B cell (primary cell): ENCODE measurements at regions of chr14 and their contacts with region 1.

Region 1: GRCh38 chr14:35687335-35687939 is 121.7 kb downstream of the RALGAPA1 start:
- DNase-seq: peak; percentile 30
- ATAC-seq: peak; percentile 51
- H3K4me3 ChIP-seq: no peak overlapping the region
- H3K4me3 Mint-ChIP-seq: no peak overlapping the region
- H3K27ac ChIP-seq: no peak overlapping the region
- H3K27ac Mint-ChIP-seq: no peak overlapping the region
- H3K4me1 ChIP-seq: peaks cover 0 to 3% of the 10 kb centered on the region in 2 donors
- H3K4me1 Mint-ChIP-seq: peaks cover 6% of the 10 kb centered on the region
- H3K27me3 ChIP-seq: no peaks in the 10 kb centered on the region
- H3K27me3 Mint-ChIP-seq: no peaks in the 10 kb centered on the region
- CTCF ChIP-seq: peak; percentile 83

Region 2: DNA sequence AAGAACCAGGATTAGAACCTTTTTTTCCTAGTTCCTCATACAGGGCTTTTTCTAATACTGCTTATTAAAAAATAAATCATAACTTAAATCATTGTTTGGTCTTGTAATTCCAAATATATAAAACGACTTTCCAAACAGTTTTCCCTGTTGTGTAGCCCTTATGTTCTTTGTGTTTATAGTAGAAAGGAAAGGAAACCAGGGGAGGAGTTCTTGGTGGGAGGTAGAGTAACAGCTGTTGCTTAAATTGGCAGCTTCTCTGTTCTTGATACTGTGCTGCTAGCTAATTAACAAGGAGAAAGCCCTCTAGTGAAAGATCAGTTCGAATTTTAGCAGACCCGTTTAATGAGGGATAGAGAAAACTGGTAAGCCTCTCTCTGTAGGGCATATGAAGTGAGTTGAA is 689.7 kb before region 1 on chr14:
- CTCF ChIA-PET with region 1: no interaction called
- POLR2A ChIA-PET with region 1: no interaction called
- intact Hi-C with region 1: loop called (anchors 10 kb)
- DNase-seq: no peak
- ATAC-seq: no peak
- H3K4me3 ChIP-seq: no peak overlapping the region
- H3K4me3 Mint-ChIP-seq: no peak overlapping the region
- H3K27ac ChIP-seq: no peak overlapping the region
- H3K27ac Mint-ChIP-seq: no peak overlapping the region
- H3K4me1 ChIP-seq: no peaks in the 10 kb centered on the region
- H3K4me1 Mint-ChIP-seq: peaks cover 8% of the 10 kb centered on the region
- H3K27me3 ChIP-seq: no peaks in the 10 kb centered on the region
- H3K27me3 Mint-ChIP-seq: no peaks in the 10 kb centered on the region
- CTCF ChIP-seq: no peak

Region 3: DNA sequence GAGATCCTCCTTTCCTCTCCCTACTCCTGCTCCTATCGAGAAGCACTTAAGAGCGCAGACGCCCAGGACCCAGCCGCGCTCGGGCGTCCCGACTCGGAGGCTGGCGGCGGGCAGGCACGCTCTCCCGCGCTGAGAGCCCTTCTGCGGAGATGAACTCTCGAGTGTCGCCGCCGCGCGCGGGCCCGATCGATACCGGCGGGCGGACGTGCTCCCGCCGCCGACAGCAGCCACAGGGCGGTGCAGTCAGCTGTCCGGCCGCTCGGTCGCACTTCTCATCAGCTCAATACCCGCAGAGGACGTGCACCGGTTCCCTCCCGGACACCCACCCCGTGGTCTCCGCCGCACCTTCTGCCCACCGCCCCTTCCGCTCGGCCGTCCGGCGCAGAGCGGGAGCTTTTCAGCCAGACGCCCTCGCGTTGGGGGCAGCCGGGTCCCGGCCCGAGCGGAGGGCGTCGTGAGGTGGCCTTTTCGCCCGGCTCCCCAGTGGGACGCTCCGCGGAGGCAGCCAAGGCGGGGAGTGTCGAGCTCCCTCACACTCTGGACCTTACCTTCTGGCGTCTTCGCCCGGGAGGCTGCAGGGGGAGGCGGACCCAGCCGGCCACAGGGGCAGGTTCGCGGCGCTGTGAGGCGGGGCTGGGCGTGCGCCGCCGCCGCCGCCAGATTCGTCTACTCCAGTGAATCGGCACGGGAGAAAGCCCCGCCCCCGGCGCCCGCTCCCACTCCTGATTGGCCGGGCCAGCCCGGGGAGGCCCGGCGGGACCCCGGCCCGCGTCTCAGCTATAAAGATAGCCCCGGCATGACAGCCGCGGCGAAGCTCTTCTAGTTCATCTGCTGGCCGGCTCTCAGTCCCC is 153.9 kb before region 1 on chr14 and contains the start of gene INSM2:
- CTCF ChIA-PET with region 1: no interaction called
- POLR2A ChIA-PET with region 1: no interaction called
- intact Hi-C with region 1: no loop called
- DNase-seq: peak; percentile 57
- ATAC-seq: peak; percentile 65
- H3K4me3 ChIP-seq: peak within 1 kb of the TSS in 4 of 5 experiments; percentile 43 to 67 (median 62)
- H3K4me3 Mint-ChIP-seq: peak within 1 kb of the TSS; percentile 87
- H3K27ac ChIP-seq: no peak within 1 kb of the TSS
- H3K27ac Mint-ChIP-seq: no peak within 1 kb of the TSS
- H3K4me1 ChIP-seq: peaks cover 21 to 23% of the 10 kb centered on the region in 2 donors
- H3K4me1 Mint-ChIP-seq: peaks cover 18% of the 10 kb centered on the region
- H3K27me3 ChIP-seq: peaks cover 3 to 35% (median 34%) of the 10 kb centered on the region in 4 experiments
- H3K27me3 Mint-ChIP-seq: peaks cover 57% of the 10 kb centered on the region
- CTCF ChIP-seq: no peak
- total RNA-seq, gene INSM2: not detected in 2 replicates

Region 4: GRCh38 chr14:35631071-35631805 is 56.2 kb before region 1 on chr14:
- CTCF ChIA-PET with region 1: no interaction called
- POLR2A ChIA-PET with region 1: no interaction called
- intact Hi-C with region 1: no loop called
- DNase-seq: no peak
- ATAC-seq: no peak
- H3K4me3 ChIP-seq: no peak overlapping the region
- H3K4me3 Mint-ChIP-seq: no peak overlapping the region
- H3K27ac ChIP-seq: no peak overlapping the region
- H3K27ac Mint-ChIP-seq: no peak overlapping the region
- H3K4me1 ChIP-seq: no peaks in the 10 kb centered on the region
- H3K4me1 Mint-ChIP-seq: peaks cover 3% of the 10 kb centered on the region
- H3K27me3 ChIP-seq: no peaks in the 10 kb centered on the region
- H3K27me3 Mint-ChIP-seq: no peaks in the 10 kb centered on the region
- CTCF ChIP-seq: no peak

Region 5: DNA sequence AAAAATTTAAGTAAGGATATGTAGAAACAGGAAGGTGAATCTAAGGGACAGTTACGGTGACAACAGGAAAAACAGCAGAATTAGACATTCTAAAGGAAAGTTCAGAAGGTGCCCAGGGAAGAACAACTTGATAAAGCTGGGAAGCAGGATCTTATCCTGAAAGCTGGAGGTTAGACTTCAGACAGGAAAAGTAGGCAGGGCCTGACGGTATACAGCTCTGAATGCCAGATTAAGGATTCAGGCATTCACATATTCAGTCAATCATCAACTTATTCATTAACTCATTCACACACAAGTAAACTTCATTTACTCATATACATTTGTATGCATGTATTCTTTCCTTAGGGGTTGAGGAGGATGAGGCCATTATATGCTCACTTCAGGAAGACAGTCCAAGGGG is 40.3 kb after region 1 on chr14:
- CTCF ChIA-PET with region 1: no interaction called
- POLR2A ChIA-PET with region 1: no interaction called
- intact Hi-C with region 1: no loop called
- DNase-seq: no peak
- ATAC-seq: no peak
- H3K4me3 ChIP-seq: no peak overlapping the region
- H3K4me3 Mint-ChIP-seq: no peak overlapping the region
- H3K27ac ChIP-seq: no peak overlapping the region
- H3K27ac Mint-ChIP-seq: no peak overlapping the region
- H3K4me1 ChIP-seq: no peaks in the 10 kb centered on the region
- H3K4me1 Mint-ChIP-seq: no peaks in the 10 kb centered on the region
- H3K27me3 ChIP-seq: no peaks in the 10 kb centered on the region
- H3K27me3 Mint-ChIP-seq: no peaks in the 10 kb centered on the region
- CTCF ChIP-seq: no peak

Region 6: DNA sequence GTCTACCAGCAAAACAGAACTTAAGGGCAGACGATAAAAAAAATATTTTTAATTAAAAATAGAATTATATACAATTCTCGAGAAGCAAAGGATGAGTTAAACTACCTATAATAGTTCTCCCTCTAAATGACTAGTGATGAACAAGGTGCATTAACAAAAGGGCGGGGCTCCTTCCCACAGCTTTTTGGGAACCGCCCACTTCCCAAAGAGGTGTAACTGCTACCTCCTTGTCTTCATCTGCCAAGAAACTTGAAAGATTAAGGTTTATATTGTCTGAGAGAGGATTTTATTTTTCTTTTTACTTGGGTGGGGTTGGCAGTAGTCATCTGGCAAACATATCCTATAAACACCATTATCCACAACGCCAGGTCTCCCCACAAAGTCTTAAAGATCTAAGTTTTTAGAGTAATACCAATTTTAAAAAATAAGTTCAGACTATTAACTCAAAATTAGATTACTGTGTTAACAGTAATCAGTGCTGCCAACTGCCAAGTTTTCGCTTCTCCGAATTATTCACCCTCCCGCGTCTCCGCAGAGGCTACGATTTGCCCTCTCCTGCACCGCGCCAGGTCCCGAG is 120.7 kb after region 1 on chr14:
- CTCF ChIA-PET with region 1: no interaction called
- POLR2A ChIA-PET with region 1: no interaction called
- intact Hi-C with region 1: loop called (anchors 10 kb)
- DNase-seq: no peak
- ATAC-seq: no peak
- H3K4me3 ChIP-seq: peak overlapping the region; percentile 57 to 81 (median 70)
- H3K4me3 Mint-ChIP-seq: peak overlapping the region; percentile 98
- H3K27ac ChIP-seq: peak overlapping the region; percentile 78 to 88
- H3K27ac Mint-ChIP-seq: peak overlapping the region; percentile 95
- H3K4me1 ChIP-seq: peaks cover 12 to 14% of the 10 kb centered on the region in 2 donors
- H3K4me1 Mint-ChIP-seq: peaks cover 29% of the 10 kb centered on the region
- H3K27me3 ChIP-seq: no peaks in the 10 kb centered on the region
- H3K27me3 Mint-ChIP-seq: no peaks in the 10 kb centered on the region
- CTCF ChIP-seq: no peak

Region 7: GRCh38 chr14:36028218-36028617 is 340.8 kb after region 1 on chr14:
- CTCF ChIA-PET with region 1: no interaction called
- POLR2A ChIA-PET with region 1: no interaction called
- intact Hi-C with region 1: no loop called
- DNase-seq: no peak
- ATAC-seq: no peak
- H3K4me3 ChIP-seq: no peak overlapping the region
- H3K4me3 Mint-ChIP-seq: no peak overlapping the region
- H3K27ac ChIP-seq: no peak overlapping the region
- H3K27ac Mint-ChIP-seq: no peak overlapping the region
- H3K4me1 ChIP-seq: no peaks in the 10 kb centered on the region
- H3K4me1 Mint-ChIP-seq: no peaks in the 10 kb centered on the region
- H3K27me3 ChIP-seq: no peaks in the 10 kb centered on the region
- H3K27me3 Mint-ChIP-seq: peaks cover 7% of the 10 kb centered on the region
- CTCF ChIP-seq: no peak